Heart right ventricle (tissue), 16 donors: ENCODE measurements at regions of chr6 and their contacts with region 1.

Region 1: DNA sequence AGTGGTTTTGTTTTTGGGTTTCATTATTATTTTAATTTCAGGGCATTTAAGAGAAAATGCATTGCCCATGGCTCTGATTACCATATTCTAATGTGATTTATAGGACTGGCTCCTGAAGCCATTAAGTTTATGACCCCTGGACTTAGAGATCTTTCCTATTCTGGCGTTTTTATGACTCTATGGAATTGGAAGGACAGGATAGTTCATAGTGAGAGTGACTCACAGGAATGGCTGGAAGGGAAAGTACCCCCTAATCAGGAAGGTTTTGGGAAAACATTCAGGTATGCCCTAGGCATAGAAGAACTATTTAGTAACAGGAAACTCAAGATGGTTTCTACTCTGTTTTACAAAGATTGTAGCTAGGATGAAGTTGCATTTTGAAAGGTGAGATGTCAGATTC is 108.6 kb upstream of the SLC2A12 start:
- DNase-seq: no peak
- ATAC-seq: no peak
- H3K4me3 ChIP-seq: no peak overlapping the region
- H3K27ac ChIP-seq: no peak overlapping the region
- H3K4me1 ChIP-seq: no peaks in the 10 kb centered on the region
- H3K27me3 ChIP-seq: no peaks in the 10 kb centered on the region
- CTCF ChIP-seq: no peak

Region 2: GRCh38 chr6:134822920-134823709 is 662.1 kb after region 1 on chr6:
- intact Hi-C with region 1: loop called in 6 of 10 experiments (anchors 1 to 5 kb)
- DNase-seq: peak in 1 of 2 donors; percentile 74
- ATAC-seq: peak; percentile 88 to 96 (median 90)
- H3K4me3 ChIP-seq: no peak overlapping the region
- H3K27ac ChIP-seq: no peak overlapping the region
- H3K4me1 ChIP-seq: peaks cover 0 to 25% (median 12%) of the 10 kb centered on the region in 9 donors
- H3K27me3 ChIP-seq: no peaks in the 10 kb centered on the region
- CTCF ChIP-seq: peak; percentile 78 to 93 (median 88)